ENCODE measurements at regions of chr19 and their contacts with region 1.

Region 1: DNA sequence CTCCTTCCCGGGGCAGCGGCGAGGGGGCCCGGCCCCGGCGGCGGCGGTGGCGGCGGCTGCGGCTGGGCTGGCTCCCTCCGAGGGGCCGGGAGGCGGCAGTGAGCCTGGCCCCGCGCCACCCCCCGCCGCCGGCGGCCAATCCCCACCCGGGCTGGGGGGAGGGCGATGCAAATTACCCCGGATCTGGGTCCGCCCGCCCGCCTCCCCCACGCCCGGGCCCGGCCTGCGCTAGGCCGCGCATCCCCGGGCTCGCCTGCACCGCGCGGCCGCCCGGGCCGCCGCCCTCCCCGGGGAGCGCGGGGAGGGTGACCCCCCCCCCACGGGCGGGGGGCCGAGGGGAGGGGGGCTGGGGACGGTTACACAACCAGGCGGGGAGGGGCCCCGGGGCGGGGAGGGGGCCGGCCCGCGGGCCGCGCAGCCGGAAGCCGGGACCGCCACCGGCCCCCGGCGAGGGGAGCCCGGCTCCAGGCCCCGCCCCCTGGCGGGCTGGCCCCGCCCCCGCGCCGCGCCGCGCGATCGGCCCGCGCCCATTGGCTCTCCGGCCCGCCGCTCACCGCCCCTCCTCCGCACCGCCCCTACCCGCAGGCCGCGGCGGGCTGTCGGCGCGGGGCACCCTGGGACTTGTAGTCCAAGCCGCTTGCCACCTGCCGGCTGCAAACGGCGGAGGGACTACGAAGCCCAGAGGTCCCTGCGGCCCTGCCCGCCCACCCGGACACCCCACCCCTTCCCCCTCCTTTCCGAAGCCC is 1.1 kb downstream of the ZBTB7A start:
- DNase-seq: peak; percentile 91
- ATAC-seq: peak; percentile 78
- H3K4me3 ChIP-seq: peak overlapping the region; percentile 80 to 82
- H3K27ac ChIP-seq: peak overlapping the region; percentile 96
- H3K4me1 ChIP-seq: peaks cover 34 to 46% of the 10 kb centered on the region in 2 experiments
- H3K27me3 ChIP-seq: no peaks in the 10 kb centered on the region
- CTCF ChIP-seq: no peak
- POLR2A ChIP-seq: no peak
- RAD21 ChIP-seq: no peak

Region 2: GRCh38 chr19:3700221-3701032 is 365.2 kb before region 1 on chr19 and contains the start of gene PIP5K1C:
- CTCF ChIA-PET with region 1: no interaction called
- POLR2A ChIA-PET with region 1: no interaction called
- RAD21 ChIA-PET with region 1: no interaction called
- intact Hi-C with region 1: loop called (anchors 10 kb)
- DNase-seq: peak; percentile 75
- ATAC-seq: peak; percentile 91
- H3K4me3 ChIP-seq: peak within 1 kb of the TSS; percentile 78 to 86
- H3K27ac ChIP-seq: peak within 1 kb of the TSS; percentile 62
- H3K4me1 ChIP-seq: peaks cover 6 to 19% of the 10 kb centered on the region in 2 experiments; a peak in 3 of 4 replicates
- H3K27me3 ChIP-seq: no peaks in the 10 kb centered on the region
- CTCF ChIP-seq: peak; percentile 57 to 76 (median 57)
- POLR2A ChIP-seq: no peak
- RAD21 ChIP-seq: no peak; the same call in none of the 2 replicates
- total RNA-seq, gene PIP5K1C: 26.9 TPM

Region 3: GRCh38 chr19:4182084-4182810 is 116.6 kb after region 1 on chr19 and contains the starts of genes ANKRD24 and SIRT6:
- CTCF ChIA-PET with region 1: no interaction called
- POLR2A ChIA-PET with region 1: no interaction called
- RAD21 ChIA-PET with region 1: no interaction called
- intact Hi-C with region 1: loop called (anchors 5 kb)
- DNase-seq: peak; percentile 89
- ATAC-seq: peak; percentile 76
- H3K4me3 ChIP-seq: peak within 1 kb of the TSS; percentile 80 to 98
- H3K27ac ChIP-seq: peak within 1 kb of the TSS; percentile 77
- H3K4me1 ChIP-seq: peaks cover 10 to 29% of the 10 kb centered on the region in 2 experiments
- H3K27me3 ChIP-seq: no peaks in the 10 kb centered on the region
- CTCF ChIP-seq: no peak
- POLR2A ChIP-seq: peak; percentile 49
- RAD21 ChIP-seq: no peak
- total RNA-seq, gene ANKRD24: 1.7 TPM
- total RNA-seq, gene SIRT6: 36.3 TPM

Region 4: GRCh38 chr19:4208385-4209094 is 142.9 kb after region 1 on chr19:
- CTCF ChIA-PET with region 1: no interaction called
- POLR2A ChIA-PET with region 1: no interaction called
- RAD21 ChIA-PET with region 1: interaction called in 1 of 2 experiments, 4 read pairs
- intact Hi-C with region 1: loop called (anchors 5 kb)
- DNase-seq: peak; percentile 66
- ATAC-seq: peak; percentile 77
- H3K4me3 ChIP-seq: peak overlapping the region; percentile 40 to 48
- H3K27ac ChIP-seq: peak overlapping the region; percentile 70
- H3K4me1 ChIP-seq: peaks cover 21 to 40% of the 10 kb centered on the region in 2 experiments
- H3K27me3 ChIP-seq: no peaks in the 10 kb centered on the region
- CTCF ChIP-seq: peak; percentile 76 to 78 (median 77)
- POLR2A ChIP-seq: no peak
- RAD21 ChIP-seq: peak; percentile 77